ENCODE measurements at regions of chr5 and their contacts with region 1.

Region 1: DNA sequence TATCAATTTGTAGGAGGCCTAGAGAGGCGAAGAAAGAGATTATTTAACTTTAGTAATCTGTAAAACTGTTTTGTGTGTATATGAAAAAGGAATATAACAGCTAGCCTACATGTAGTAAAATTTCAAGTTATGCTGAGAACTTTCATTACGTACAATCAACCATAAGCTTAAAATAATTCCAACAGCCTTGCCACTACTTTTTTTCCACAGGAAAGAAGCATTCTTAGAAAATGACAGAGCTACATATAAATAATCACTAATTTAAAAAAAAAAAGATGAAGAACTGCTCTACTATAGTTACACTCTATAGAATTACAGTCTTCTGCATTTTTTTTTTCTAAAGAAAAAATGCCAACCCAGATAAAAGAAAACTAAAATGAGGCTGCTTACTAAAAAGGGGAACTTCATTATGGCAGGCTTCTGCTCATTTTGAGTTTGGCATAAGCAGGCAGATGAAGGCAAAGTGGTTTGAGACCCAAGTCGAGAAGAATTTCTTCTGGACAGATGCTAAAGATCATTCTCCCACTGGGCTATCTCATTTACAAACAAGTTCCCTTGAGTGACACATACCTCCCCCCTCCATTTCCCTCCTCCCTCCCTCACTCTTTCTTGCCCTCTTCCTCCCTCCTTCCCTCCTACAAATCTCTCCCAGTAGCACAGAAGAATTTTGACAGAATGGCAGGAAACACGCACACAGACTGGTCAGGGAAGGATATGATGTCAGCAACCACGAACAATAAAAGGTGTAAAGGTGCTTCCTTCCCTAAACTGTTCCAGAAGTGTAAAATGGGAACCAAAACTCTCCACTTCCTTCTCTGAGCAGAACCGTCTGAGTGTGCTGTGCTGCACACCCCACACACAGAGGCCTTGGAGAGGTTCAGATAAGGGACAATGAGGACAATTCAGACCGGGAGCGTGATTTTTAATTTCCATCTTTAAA is 56.1 kb downstream of the MEF2C start:
- DNase-seq: peak; percentile 83
- H3K4me3 ChIP-seq: peak overlapping the region; percentile 54
- H3K27ac ChIP-seq: peak overlapping the region; percentile 78
- H3K4me1 ChIP-seq: peaks cover 89% of the 10 kb centered on the region
- CTCF ChIP-seq: no peak

Region 2: GRCh38 chr5:88740604-88741187 is 86.2 kb before region 1 on chr5:
- CTCF ChIA-PET with region 1: no interaction called
- POLR2A ChIA-PET with region 1: interaction called, 17 read pairs
- intact Hi-C with region 1: no loop called
- DNase-seq: no peak
- H3K4me3 ChIP-seq: no peak overlapping the region
- H3K27ac ChIP-seq: no peak overlapping the region
- H3K4me1 ChIP-seq: peaks cover 18% of the 10 kb centered on the region
- CTCF ChIP-seq: no peak

Region 3: GRCh38 chr5:88746438-88746882 is 80.5 kb before region 1 on chr5:
- CTCF ChIA-PET with region 1: no interaction called
- POLR2A ChIA-PET with region 1: interaction called, 17 read pairs
- intact Hi-C with region 1: no loop called
- DNase-seq: peak; percentile 64
- H3K4me3 ChIP-seq: peak overlapping the region; percentile 24
- H3K27ac ChIP-seq: peak overlapping the region; percentile 44
- H3K4me1 ChIP-seq: peaks cover 18% of the 10 kb centered on the region
- CTCF ChIP-seq: no peak

Region 4: GRCh38 chr5:88847420-88847819 is 20.5 kb after region 1 on chr5:
- CTCF ChIA-PET with region 1: no interaction called
- POLR2A ChIA-PET with region 1: interaction called, 16 read pairs
- intact Hi-C with region 1: no loop called
- DNase-seq: no peak
- H3K4me3 ChIP-seq: no peak overlapping the region
- H3K27ac ChIP-seq: no peak overlapping the region
- H3K4me1 ChIP-seq: peaks cover 11% of the 10 kb centered on the region
- CTCF ChIP-seq: no peak

Region 5: DNA sequence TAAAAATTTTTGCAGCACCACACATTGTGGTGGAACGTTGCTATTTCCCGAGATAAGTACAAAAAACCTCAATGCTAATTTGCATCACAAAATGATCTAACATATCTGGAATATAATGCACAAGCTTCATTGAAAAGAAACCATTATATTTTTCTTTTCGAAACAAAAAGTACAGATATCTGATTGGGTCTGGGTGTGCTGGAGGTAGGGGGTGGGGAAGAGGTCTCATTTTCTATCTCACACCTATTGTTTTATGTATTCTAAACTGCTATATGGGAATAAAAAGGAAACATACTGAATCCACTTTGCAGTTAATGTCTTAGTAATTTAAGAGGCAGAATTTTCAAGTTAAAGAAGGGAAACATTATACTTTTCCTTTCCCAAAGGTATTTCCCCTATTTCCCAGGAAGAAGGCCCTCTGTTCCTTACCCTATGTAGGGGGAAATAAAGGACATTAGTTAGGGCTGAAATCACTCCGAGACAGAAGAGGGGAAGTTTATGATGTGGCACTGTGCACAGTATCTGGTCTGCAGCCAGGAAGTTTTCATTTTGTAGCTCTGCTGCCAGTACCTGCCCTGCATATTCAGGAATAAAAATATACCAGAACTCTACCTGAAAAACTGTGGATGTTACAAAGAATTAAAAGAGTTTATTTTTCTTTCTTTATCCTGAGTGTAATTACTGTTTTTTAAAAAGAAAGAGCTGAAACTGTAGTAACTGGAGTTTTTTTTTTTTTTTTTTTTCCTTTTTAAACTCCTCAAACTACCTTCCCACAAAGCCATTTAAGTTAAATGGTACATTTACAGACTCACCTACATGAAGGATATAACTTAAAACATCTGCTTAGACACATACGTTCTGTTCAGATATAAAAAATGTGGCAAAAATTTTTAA is 48.7 kb after region 1 on chr5:
- CTCF ChIA-PET with region 1: no interaction called
- POLR2A ChIA-PET with region 1: interaction called, 21 read pairs
- intact Hi-C with region 1: no loop called
- DNase-seq: peak; percentile 56
- H3K4me3 ChIP-seq: peak overlapping the region; percentile 55
- H3K27ac ChIP-seq: peak overlapping the region; percentile 33
- H3K4me1 ChIP-seq: peaks cover 55% of the 10 kb centered on the region
- CTCF ChIP-seq: no peak

Region 6: DNA sequence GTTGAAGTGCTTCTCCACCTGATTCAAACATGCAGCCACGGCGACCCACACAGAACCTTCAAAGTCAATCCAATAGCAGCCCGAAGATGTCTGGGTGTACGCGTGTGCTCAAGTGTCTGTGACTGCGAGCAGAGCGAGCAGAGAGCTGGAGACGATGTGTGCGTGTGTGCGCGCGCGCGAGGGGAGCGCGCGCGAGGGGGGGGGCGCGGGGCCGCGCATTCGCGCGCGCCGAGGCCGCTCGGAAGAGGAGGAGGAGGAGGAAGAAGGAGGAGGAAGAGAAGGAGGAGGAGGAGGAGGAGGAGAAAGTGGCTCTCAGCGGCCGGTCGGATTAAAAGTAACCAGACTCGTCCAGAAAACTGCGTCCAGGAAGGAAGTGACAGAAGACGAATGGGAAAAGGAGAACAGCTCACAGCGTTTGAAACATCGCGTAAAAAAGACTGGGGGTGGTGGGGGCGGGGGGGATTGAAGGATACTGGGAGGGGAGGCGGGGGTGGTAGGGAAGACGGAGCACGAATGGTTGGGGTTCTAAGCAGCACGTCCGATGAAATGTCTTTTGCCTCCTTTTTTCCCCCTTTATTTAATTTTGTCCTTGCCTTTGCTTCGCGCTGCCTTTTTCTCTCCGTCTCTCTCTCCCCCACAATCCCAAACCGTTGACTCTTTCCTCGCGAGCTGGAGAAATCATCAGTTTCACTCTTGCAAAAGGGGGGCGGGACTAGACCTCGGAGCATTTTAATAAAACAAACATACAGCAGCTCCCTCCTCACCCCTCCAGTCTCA is 56.3 kb after region 1 on chr5 and contains the start of gene MEF2C:
- CTCF ChIA-PET with region 1: no interaction called
- POLR2A ChIA-PET with region 1: interaction called, 21 read pairs
- intact Hi-C with region 1: loop called (anchors 1 kb)
- DNase-seq: peak; percentile 78
- H3K4me3 ChIP-seq: peak within 1 kb of the TSS; percentile 73
- H3K27ac ChIP-seq: peak within 1 kb of the TSS; percentile 2
- H3K4me1 ChIP-seq: peaks cover 39% of the 10 kb centered on the region
- CTCF ChIP-seq: no peak
- total RNA-seq, gene MEF2C: 5.5 and 9.5 TPM in 2 replicates

Measured in OCI-LY7 (cell line).